CD4-positive, alpha-beta T cell (primary cell): ENCODE measurements at regions of chr6 and their contacts with region 1.

Region 1: DNA sequence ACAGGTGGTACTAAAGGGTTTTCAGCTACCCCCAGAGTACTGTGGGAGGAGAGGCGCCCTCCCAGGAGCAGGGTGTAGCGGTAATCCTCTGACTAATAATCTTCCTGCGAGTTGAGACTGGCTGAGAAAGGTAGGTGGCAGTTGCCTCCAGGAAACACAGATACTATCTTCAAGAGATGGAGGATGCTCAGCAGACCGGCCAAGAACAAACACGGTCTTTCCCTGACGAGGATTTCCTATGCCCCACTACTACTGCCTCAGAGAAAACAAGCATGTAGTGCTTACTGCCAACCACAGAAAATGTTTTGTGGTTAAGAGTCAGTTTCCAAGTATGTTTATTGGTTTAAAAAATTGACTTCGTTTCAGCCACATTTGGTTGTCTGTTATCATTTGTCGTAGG is 26.8 kb downstream of the C6orf89 start:
- DNase-seq: peak; percentile 19 to 89 (median 49)
- ATAC-seq: peak; percentile 92
- H3K4me3 ChIP-seq: peak overlapping the region; percentile 23
- H3K4me3 Mint-ChIP-seq: peak overlapping the region; percentile 64
- H3K27ac ChIP-seq: peak overlapping the region; percentile 32 to 50
- H3K27ac Mint-ChIP-seq: peak overlapping the region; percentile 82
- H3K4me1 ChIP-seq: peaks cover 38% of the 10 kb centered on the region
- H3K4me1 Mint-ChIP-seq: peaks cover 36% of the 10 kb centered on the region
- H3K27me3 ChIP-seq: no peaks in the 10 kb centered on the region
- H3K27me3 Mint-ChIP-seq: no peaks in the 10 kb centered on the region
- CTCF ChIP-seq: no peak

Region 2: GRCh38 chr6:36874443-36875249 is 37.9 kb before region 1 on chr6 and contains the start of gene PPIL1:
- CTCF ChIA-PET with region 1: interaction called, 3 read pairs
- POLR2A ChIA-PET with region 1: no interaction called
- intact Hi-C with region 1: loop called in 1 of 2 experiments (anchors 2 kb)
- DNase-seq: peak; percentile 71 to 94 (median 82)
- ATAC-seq: peak; percentile 91
- H3K4me3 ChIP-seq: peak within 1 kb of the TSS; percentile 69
- H3K4me3 Mint-ChIP-seq: peak within 1 kb of the TSS; percentile 95
- H3K27ac ChIP-seq: peak within 1 kb of the TSS; percentile 80 to 82
- H3K27ac Mint-ChIP-seq: peak within 1 kb of the TSS; percentile 95
- H3K4me1 ChIP-seq: peaks cover 14% of the 10 kb centered on the region
- H3K4me1 Mint-ChIP-seq: peaks cover 45% of the 10 kb centered on the region
- H3K27me3 ChIP-seq: peaks cover 0 to 5% of the 10 kb centered on the region in 2 experiments
- H3K27me3 Mint-ChIP-seq: peaks cover 17% of the 10 kb centered on the region
- CTCF ChIP-seq: no peak
- total RNA-seq, gene PPIL1: 1.8 to 2.2 TPM

Region 3: DNA sequence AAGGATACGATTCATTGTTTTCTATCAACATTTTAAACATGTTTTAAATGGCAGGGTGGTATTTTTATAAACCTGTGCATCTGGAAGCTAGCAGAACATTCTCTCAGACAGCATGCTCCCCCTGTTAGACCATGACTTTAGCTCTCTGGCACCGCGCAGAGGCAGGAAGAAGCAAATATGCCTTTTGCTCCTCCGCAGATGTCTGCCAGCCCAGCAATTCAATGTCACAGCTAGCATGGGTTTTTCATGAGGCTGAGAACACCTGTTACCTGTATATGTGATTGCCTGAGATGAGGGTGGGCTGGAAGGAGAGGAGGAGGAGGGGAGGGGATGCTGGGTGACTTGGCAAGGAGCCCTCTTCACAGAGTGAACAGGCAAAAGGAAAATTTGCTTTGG is 66.8 kb after region 1 on chr6:
- CTCF ChIA-PET with region 1: no interaction called
- POLR2A ChIA-PET with region 1: no interaction called
- intact Hi-C with region 1: loop called (anchors 2 to 5 kb)
- DNase-seq: peak in 10 of 14 experiments; percentile 19 to 68 (median 42)
- ATAC-seq: peak; percentile 90
- H3K4me3 ChIP-seq: no peak overlapping the region
- H3K4me3 Mint-ChIP-seq: peak overlapping the region; percentile 79
- H3K27ac ChIP-seq: no peak overlapping the region
- H3K27ac Mint-ChIP-seq: peak overlapping the region; percentile 85
- H3K4me1 ChIP-seq: peaks cover 46% of the 10 kb centered on the region
- H3K4me1 Mint-ChIP-seq: peaks cover 32% of the 10 kb centered on the region
- H3K27me3 ChIP-seq: no peaks in the 10 kb centered on the region
- H3K27me3 Mint-ChIP-seq: no peaks in the 10 kb centered on the region
- CTCF ChIP-seq: peak; percentile 58

Region 4: GRCh38 chr6:37122861-37123260 is 210.3 kb after region 1 on chr6:
- CTCF ChIA-PET with region 1: no interaction called
- POLR2A ChIA-PET with region 1: no interaction called
- intact Hi-C with region 1: no loop called
- DNase-seq: no peak
- ATAC-seq: no peak
- H3K4me3 ChIP-seq: no peak overlapping the region
- H3K4me3 Mint-ChIP-seq: no peak overlapping the region
- H3K27ac ChIP-seq: no peak overlapping the region
- H3K27ac Mint-ChIP-seq: no peak overlapping the region
- H3K4me1 ChIP-seq: no peaks in the 10 kb centered on the region
- H3K4me1 Mint-ChIP-seq: no peaks in the 10 kb centered on the region
- H3K27me3 ChIP-seq: no peaks in the 10 kb centered on the region
- H3K27me3 Mint-ChIP-seq: no peaks in the 10 kb centered on the region
- CTCF ChIP-seq: no peak

Region 5: DNA sequence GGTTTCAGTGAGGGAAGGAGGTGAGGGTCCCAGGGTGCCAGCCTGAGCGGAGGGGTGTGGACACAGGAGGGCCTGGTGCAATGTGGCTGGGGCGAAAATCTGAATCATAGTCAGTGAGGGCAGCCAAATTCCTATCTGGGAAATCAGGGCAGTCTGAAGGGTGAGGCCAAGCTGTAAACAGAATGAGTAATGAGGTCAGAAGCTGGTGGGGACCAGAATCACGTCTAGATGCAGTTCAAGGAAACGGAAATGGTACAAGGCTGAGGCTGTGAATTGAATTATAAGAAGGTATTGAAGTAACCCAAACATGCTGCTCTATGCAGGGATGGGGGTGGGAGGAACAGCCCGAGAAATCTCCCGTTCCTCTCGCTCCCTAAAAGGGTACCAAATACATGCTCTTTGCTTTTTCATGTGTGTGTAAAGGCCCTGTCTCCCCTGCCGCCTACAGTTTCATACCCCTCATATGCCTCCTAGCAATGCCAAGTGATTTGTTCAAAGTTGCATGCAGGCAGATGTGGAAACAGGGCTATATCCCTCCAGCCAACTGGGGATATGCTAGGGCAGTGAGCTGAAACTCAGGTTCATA is 222.1 kb after region 1 on chr6:
- CTCF ChIA-PET with region 1: no interaction called
- POLR2A ChIA-PET with region 1: no interaction called
- intact Hi-C with region 1: no loop called
- DNase-seq: peak in 10 of 14 experiments; percentile 2 to 79 (median 10)
- ATAC-seq: peak; percentile 78
- H3K4me3 ChIP-seq: no peak overlapping the region
- H3K4me3 Mint-ChIP-seq: peak overlapping the region; percentile 28
- H3K27ac ChIP-seq: peak overlapping the region in 1 of 2 donors; percentile 72
- H3K27ac Mint-ChIP-seq: peak overlapping the region; percentile 81
- H3K4me1 ChIP-seq: peaks cover 49% of the 10 kb centered on the region
- H3K4me1 Mint-ChIP-seq: peaks cover 19% of the 10 kb centered on the region
- H3K27me3 ChIP-seq: no peaks in the 10 kb centered on the region
- H3K27me3 Mint-ChIP-seq: no peaks in the 10 kb centered on the region
- CTCF ChIP-seq: no peak